ENCODE measurements at regions of chr19 and their contacts with region 1.

Region 1: GRCh38 chr19:50922317-50922853 is 11.2 kb upstream of the KLK4 start:
- DNase-seq: peak; percentile 89
- ATAC-seq: peak; percentile 99
- H3K4me3 ChIP-seq: no peak overlapping the region
- H3K4me3 Mint-ChIP-seq: peak overlapping the region; percentile 36
- H3K27ac ChIP-seq: no peak overlapping the region
- H3K27ac Mint-ChIP-seq: peak overlapping the region; percentile 37
- H3K4me1 ChIP-seq: peaks cover 8 to 11% of the 10 kb centered on the region in 2 donors
- H3K4me1 Mint-ChIP-seq: peaks cover 11% of the 10 kb centered on the region
- H3K27me3 ChIP-seq: peaks cover 0 to 11% (median 5%) of the 10 kb centered on the region in 4 experiments
- H3K27me3 Mint-ChIP-seq: peaks cover 42% of the 10 kb centered on the region
- CTCF ChIP-seq: peak; percentile 91

Region 2: DNA sequence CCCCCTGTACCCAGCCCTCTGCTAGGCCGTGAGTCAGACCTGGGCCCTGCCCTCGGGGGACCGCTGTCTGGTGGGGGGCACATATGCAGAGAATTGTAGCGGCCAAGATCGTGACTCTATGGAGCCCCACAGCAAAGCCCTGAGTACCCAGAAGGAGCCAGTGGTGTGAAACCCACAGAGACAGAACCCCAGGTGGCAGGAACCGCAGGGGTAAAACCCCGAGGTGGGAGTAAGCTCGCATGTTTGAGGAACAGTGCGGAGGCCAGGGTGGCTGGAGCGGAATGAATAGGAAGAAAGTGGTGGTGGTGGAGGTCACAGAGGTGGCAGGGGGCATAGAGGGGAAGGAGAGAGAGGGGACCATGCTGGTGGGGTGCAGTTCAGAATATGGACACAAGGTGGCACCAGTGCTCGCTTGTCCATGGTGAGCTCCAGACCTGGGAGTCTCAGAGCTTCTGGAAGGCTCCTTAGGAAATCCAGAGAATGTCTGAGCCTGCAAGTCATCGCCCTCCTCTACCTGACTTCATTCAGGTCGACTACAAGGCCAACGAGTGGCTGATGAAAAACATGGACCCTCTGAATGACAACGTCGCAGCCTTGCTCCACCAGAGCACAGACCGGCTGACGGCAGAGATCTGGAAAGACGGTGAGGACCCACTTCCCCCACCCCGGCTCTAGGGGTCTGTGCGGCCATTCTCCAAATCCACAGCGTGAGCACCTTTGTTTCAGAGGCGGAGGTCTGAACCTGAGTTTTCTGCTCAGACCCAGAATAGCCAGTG is 670.1 kb before region 1 on chr19:
- CTCF ChIA-PET with region 1: interaction called, 4 read pairs
- POLR2A ChIA-PET with region 1: no interaction called
- intact Hi-C with region 1: loop called (anchors 2 kb)
- DNase-seq: peak; percentile 61
- ATAC-seq: peak; percentile 45
- H3K4me3 ChIP-seq: no peak overlapping the region
- H3K4me3 Mint-ChIP-seq: no peak overlapping the region
- H3K27ac ChIP-seq: no peak overlapping the region
- H3K27ac Mint-ChIP-seq: no peak overlapping the region
- H3K4me1 ChIP-seq: no peaks in the 10 kb centered on the region
- H3K4me1 Mint-ChIP-seq: peaks cover 5% of the 10 kb centered on the region
- H3K27me3 ChIP-seq: peaks cover 0 to 9% (median 0%) of the 10 kb centered on the region in 4 experiments
- H3K27me3 Mint-ChIP-seq: peaks cover 18% of the 10 kb centered on the region
- CTCF ChIP-seq: peak; percentile 74

Region 3: GRCh38 chr19:50669302-50670101 is 252.9 kb before region 1 on chr19:
- CTCF ChIA-PET with region 1: interaction called, 22 read pairs
- POLR2A ChIA-PET with region 1: no interaction called
- intact Hi-C with region 1: loop called (anchors 2 kb)
- DNase-seq: peak; percentile 63
- ATAC-seq: no peak
- H3K4me3 ChIP-seq: no peak overlapping the region
- H3K4me3 Mint-ChIP-seq: no peak overlapping the region
- H3K27ac ChIP-seq: no peak overlapping the region
- H3K27ac Mint-ChIP-seq: no peak overlapping the region
- H3K4me1 ChIP-seq: peaks cover 8 to 18% of the 10 kb centered on the region in 2 donors
- H3K4me1 Mint-ChIP-seq: peaks cover 2% of the 10 kb centered on the region
- H3K27me3 ChIP-seq: peaks cover 0 to 45% (median 18%) of the 10 kb centered on the region in 4 experiments
- H3K27me3 Mint-ChIP-seq: peaks cover 42% of the 10 kb centered on the region
- CTCF ChIP-seq: peak; percentile 82

Region 4: DNA sequence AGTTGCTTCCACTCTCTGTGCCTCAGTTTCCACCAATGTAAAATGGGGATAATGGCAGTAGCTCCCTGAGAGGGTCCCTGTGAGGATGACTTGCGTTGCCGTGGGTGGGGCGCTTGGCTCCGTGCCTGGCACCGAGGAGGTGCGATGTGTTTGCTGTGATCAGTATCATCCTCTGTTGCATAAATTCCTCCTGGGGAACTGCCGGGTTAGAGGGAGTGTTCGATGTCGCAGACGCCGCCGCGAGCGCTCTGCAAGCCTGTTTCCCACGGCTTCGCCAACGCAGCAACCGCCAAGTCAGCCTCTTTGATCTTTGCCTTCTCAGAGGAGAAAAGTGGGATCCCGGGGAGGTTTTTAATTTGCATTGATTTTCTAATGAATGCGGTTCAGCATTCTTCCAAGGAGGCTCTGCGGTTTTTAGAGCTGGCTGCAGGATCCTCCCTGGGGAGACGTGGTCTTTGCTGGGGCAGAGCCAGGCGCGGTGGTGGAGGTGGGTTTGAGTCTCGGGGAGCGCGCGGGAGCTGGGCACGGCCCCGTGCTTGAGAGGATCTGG is 144.6 kb before region 1 on chr19:
- CTCF ChIA-PET with region 1: interaction called, 7 read pairs
- POLR2A ChIA-PET with region 1: no interaction called
- intact Hi-C with region 1: loop called (anchors 1 kb)
- DNase-seq: peak; percentile 15
- ATAC-seq: no peak
- H3K4me3 ChIP-seq: no peak overlapping the region
- H3K4me3 Mint-ChIP-seq: no peak overlapping the region
- H3K27ac ChIP-seq: no peak overlapping the region
- H3K27ac Mint-ChIP-seq: no peak overlapping the region
- H3K4me1 ChIP-seq: peaks cover 0 to 8% of the 10 kb centered on the region in 2 donors
- H3K4me1 Mint-ChIP-seq: peaks cover 4% of the 10 kb centered on the region
- H3K27me3 ChIP-seq: peaks cover 0 to 62% (median 26%) of the 10 kb centered on the region in 4 experiments
- H3K27me3 Mint-ChIP-seq: peaks cover 64% of the 10 kb centered on the region
- CTCF ChIP-seq: no peak

Region 5: DNA sequence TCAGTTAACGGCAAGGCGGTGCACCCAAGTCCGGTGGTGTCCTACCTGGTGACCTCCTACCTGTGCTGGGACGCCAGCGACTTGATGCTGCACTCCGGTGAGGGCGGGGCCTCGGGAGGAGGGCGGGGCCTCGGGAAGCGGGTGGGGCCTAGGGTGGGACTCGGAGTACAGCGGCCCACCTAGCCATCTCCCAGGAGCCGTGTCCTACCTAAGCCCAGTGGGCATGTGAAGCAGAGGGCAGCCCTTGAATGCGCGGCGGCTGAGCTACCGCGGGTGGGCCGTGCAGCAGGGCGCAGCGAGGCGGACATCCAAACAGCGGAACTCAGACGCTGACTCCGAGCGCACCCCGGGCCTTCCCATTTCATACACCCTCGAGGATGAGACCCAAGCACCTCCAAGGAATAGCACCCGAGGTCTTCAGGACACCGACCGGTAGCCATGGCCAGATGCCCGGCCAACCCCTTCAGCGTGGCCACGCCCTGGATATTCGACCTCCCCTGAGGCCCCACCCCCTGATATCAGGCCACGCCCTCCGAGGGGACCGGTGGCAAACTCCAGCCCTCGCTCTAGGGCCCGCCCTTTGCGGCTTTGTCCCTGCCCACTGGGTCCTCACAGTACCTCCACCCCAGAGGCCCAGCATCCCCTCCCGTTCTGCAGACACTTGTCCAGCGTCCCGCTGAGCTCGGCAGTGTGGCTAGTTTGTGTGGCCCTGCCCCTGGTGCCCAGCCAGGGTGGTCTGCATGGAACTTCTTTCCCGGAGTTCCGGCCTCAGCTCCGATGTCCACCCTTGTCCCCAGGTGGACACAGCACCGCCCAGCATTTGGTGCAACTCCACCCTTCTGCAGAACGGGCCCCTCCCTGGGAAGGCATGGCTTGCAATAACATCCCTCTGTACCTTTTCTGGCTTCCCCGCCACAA is 104.2 kb before region 1 on chr19:
- CTCF ChIA-PET with region 1: interaction called, 13 read pairs
- POLR2A ChIA-PET with region 1: no interaction called
- intact Hi-C with region 1: no loop called
- DNase-seq: peak; percentile 77
- ATAC-seq: peak; percentile 69
- H3K4me3 ChIP-seq: peak overlapping the region in 4 of 5 experiments; percentile 60 to 76 (median 67)
- H3K4me3 Mint-ChIP-seq: peak overlapping the region; percentile 93
- H3K27ac ChIP-seq: peak overlapping the region in 1 of 2 donors; percentile 29
- H3K27ac Mint-ChIP-seq: peak overlapping the region; percentile 90
- H3K4me1 ChIP-seq: peaks cover 45 to 53% of the 10 kb centered on the region in 2 donors
- H3K4me1 Mint-ChIP-seq: peaks cover 63% of the 10 kb centered on the region
- H3K27me3 ChIP-seq: peaks cover 0 to 36% (median 2%) of the 10 kb centered on the region in 4 experiments
- H3K27me3 Mint-ChIP-seq: peaks cover 22% of the 10 kb centered on the region
- CTCF ChIP-seq: no peak

Region 6: DNA sequence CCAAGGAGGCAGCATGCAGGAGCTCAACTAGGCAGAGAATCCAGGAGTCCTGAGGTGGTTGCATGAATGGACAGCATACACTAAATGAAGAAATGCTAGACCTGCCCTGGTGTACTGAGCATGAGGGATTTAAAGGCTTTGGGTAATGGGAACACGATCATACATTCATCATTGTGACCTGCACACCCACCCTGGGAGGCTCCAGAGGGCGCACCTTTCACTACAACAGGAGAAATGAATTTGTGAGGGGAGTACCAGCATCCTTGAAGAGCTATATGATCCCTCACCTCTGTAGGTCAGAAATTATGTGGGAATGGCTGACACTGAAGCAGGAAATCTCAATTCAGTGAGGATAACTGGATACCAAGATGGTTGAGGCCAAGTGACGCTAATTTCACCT is 40.2 kb before region 1 on chr19:
- CTCF ChIA-PET with region 1: interaction called, 13 read pairs
- POLR2A ChIA-PET with region 1: no interaction called
- intact Hi-C with region 1: no loop called
- DNase-seq: no peak
- ATAC-seq: no peak
- H3K4me3 ChIP-seq: no peak overlapping the region
- H3K4me3 Mint-ChIP-seq: no peak overlapping the region
- H3K27ac ChIP-seq: no peak overlapping the region
- H3K27ac Mint-ChIP-seq: no peak overlapping the region
- H3K4me1 ChIP-seq: peaks cover under 1 to 5% of the 10 kb centered on the region in 2 donors
- H3K4me1 Mint-ChIP-seq: peaks cover 7% of the 10 kb centered on the region
- H3K27me3 ChIP-seq: no peaks in the 10 kb centered on the region
- H3K27me3 Mint-ChIP-seq: peaks cover 19% of the 10 kb centered on the region
- CTCF ChIP-seq: no peak

Region 7: GRCh38 chr19:50906217-50906616 is 16.2 kb before region 1 on chr19:
- CTCF ChIA-PET with region 1: interaction called, 18 read pairs
- POLR2A ChIA-PET with region 1: interaction called, 3 read pairs
- intact Hi-C with region 1: no loop called
- DNase-seq: no peak
- ATAC-seq: no peak
- H3K4me3 ChIP-seq: no peak overlapping the region
- H3K4me3 Mint-ChIP-seq: no peak overlapping the region
- H3K27ac ChIP-seq: no peak overlapping the region
- H3K27ac Mint-ChIP-seq: no peak overlapping the region
- H3K4me1 ChIP-seq: peaks cover 10 to 18% of the 10 kb centered on the region in 2 donors
- H3K4me1 Mint-ChIP-seq: peaks cover 20% of the 10 kb centered on the region
- H3K27me3 ChIP-seq: peaks cover 0 to 43% (median 21%) of the 10 kb centered on the region in 4 experiments
- H3K27me3 Mint-ChIP-seq: peaks cover 45% of the 10 kb centered on the region
- CTCF ChIP-seq: peak; percentile 30

Measured in B cell (primary cell).